ENCODE measurements at regions of chr6 and their contacts with region 1.

Region 1: DNA sequence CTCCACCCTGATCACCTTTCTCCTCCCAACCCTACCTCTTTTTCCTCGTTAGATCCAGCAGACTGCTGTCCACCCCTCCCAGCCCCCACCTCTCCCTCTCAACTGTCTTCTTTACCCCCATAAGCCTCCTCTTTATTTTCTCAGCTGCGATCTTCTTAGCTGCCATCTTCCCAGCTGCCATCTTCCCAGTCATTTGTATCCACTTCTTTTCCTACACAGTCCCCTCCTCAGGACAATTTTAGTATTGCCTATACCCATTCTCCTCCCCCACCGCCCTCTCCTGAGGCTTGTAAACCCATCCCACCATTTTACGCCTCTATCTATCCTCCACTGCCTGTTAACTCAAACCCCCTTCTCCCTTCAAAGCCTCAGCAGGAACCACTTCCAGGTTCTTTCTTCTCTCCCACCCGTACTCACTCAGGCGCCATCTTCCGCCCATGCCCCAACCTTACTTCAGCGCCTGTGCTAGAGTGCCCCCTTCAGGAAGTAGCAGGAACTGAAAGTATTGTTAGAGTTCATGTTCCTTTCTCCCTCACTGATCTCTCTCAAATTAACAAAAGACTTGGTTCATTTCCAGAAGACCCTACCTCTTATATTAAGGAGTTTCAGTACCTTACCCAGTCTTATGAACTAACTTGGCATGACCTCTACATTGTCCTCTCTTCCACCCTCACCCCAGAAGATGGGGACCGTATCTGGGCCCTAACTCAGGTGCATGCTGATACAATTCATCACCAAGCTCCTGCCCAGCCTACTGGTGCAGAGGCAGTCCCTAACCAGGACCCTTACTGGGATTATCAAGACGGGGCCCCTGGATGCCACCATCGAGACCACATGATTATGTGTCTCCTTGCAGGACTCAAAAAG is 236.0 kb downstream of the ADGRG6 start:
- DNase-seq: no peak
- H3K4me3 ChIP-seq: no peak overlapping the region
- H3K27ac ChIP-seq: no peak overlapping the region
- H3K4me1 ChIP-seq: peaks cover 0 to 7% (median 5%) of the 10 kb centered on the region in 4 donors
- H3K27me3 ChIP-seq: no peaks in the 10 kb centered on the region
- CTCF ChIP-seq: peak in 2 of 3 experiments; percentile 26 to 58
- EP300 ChIP-seq: no peak
- POLR2A ChIP-seq: no peak

Region 2: GRCh38 chr6:142474531-142475289 is 63.1 kb before region 1 on chr6:
- intact Hi-C with region 1: loop called (anchors 10 kb)
- DNase-seq: no peak
- H3K4me3 ChIP-seq: no peak overlapping the region
- H3K27ac ChIP-seq: no peak overlapping the region
- H3K4me1 ChIP-seq: peaks cover 0 to 4% (median 0%) of the 10 kb centered on the region in 4 donors
- H3K27me3 ChIP-seq: no peaks in the 10 kb centered on the region
- CTCF ChIP-seq: peak; percentile 77 to 84 (median 81)
- EP300 ChIP-seq: no peak
- POLR2A ChIP-seq: no peak

Measured in esophagus muscularis mucosa (tissue), 4 donors.